T-cell (primary cell): ENCODE measurements at regions of chr1 and their contacts with region 1.

Region 1: GRCh38 chr1:9004700-9005394 is 21.4 kb downstream of the SLC2A7 start:
- DNase-seq: peak; percentile 42 to 86 (median 74)
- ATAC-seq: peak; percentile 88 to 95 (median 90)
- H3K4me3 ChIP-seq: peak overlapping the region in 1 of 2 donors; percentile 38
- H3K4me3 Mint-ChIP-seq: peak overlapping the region in 2 of 3 donors; percentile 21 to 63
- H3K27ac ChIP-seq: no peak overlapping the region
- H3K27ac Mint-ChIP-seq: peak overlapping the region in 1 of 2 donors; percentile 52
- H3K4me1 ChIP-seq: peaks cover 5 to 10% of the 10 kb centered on the region in 2 experiments
- H3K4me1 Mint-ChIP-seq: peaks cover 11 to 13% (median 13%) of the 10 kb centered on the region in 3 donors
- H3K27me3 ChIP-seq: peaks cover 0 to 17% of the 10 kb centered on the region in 2 experiments
- H3K27me3 Mint-ChIP-seq: peaks cover 0 to 1% of the 10 kb centered on the region in 2 donors

Region 2: DNA sequence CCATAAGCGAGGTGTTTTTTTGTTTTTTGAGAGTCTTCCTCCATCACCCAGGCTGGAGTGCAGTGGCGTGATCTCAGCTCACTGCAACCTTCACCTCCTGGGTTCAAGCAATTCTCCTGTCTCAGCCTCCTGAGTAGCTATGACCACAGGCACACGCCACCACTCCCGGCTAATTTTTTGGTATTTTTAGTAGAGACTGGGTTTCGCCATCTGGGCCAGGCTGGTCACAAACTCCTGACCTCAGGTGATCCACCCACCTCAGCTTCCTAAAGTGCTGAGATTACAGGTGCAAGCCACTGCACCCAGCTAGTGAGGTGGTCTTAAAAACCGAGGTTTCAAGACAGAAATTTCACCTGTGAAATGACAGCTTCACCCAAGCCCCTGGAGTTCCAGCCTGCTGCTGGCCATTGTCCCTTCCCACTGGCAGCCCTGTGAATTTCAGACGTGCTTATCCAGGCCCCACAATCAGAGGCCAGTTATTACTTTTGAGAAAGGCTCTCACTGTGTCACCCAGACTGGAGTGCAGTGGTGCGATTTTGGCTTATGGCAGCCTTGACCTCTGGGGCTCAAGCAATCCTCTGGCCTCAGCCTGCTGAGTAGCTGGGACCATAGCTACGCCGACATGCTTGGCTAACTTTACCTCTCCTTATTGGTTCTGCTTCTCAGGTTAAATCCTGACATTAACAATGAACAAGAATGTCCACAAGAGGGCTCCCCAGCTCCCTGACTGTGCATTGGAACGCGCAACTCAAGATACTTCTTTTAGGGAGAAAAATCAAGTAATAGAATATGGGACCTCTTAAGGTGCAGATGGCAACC is 145.8 kb before region 1 on chr1:
- CTCF ChIA-PET with region 1: interaction called, 6 to 19 read pairs
- POLR2A ChIA-PET with region 1: no interaction called
- DNase-seq: peak in 32 of 35 experiments; percentile 12 to 76 (median 43)
- ATAC-seq: peak; percentile 62 to 75 (median 68)
- H3K4me3 ChIP-seq: no peak overlapping the region
- H3K4me3 Mint-ChIP-seq: no peak overlapping the region
- H3K27ac ChIP-seq: no peak overlapping the region
- H3K27ac Mint-ChIP-seq: peak overlapping the region; percentile 53 to 84
- H3K4me1 ChIP-seq: peaks cover 0 to 12% of the 10 kb centered on the region in 2 experiments
- H3K4me1 Mint-ChIP-seq: peaks cover 16 to 25% (median 21%) of the 10 kb centered on the region in 3 donors
- H3K27me3 ChIP-seq: no peaks in the 10 kb centered on the region
- H3K27me3 Mint-ChIP-seq: no peaks in the 10 kb centered on the region

Region 3: GRCh38 chr1:8879922-8880676 is 124.7 kb before region 1 on chr1:
- CTCF ChIA-PET with region 1: no interaction called
- POLR2A ChIA-PET with region 1: no interaction called
- DNase-seq: peak in 1 of 35 experiments; percentile 15
- ATAC-seq: no peak
- H3K4me3 ChIP-seq: no peak overlapping the region
- H3K4me3 Mint-ChIP-seq: peak overlapping the region; percentile 82 to 95 (median 89)
- H3K27ac ChIP-seq: no peak overlapping the region
- H3K27ac Mint-ChIP-seq: peak overlapping the region; percentile 95 to 98
- H3K4me1 ChIP-seq: peaks cover 8 to 44% of the 10 kb centered on the region in 2 experiments
- H3K4me1 Mint-ChIP-seq: peaks cover 32 to 34% (median 34%) of the 10 kb centered on the region in 3 donors
- H3K27me3 ChIP-seq: no peaks in the 10 kb centered on the region
- H3K27me3 Mint-ChIP-seq: no peaks in the 10 kb centered on the region

Region 4: DNA sequence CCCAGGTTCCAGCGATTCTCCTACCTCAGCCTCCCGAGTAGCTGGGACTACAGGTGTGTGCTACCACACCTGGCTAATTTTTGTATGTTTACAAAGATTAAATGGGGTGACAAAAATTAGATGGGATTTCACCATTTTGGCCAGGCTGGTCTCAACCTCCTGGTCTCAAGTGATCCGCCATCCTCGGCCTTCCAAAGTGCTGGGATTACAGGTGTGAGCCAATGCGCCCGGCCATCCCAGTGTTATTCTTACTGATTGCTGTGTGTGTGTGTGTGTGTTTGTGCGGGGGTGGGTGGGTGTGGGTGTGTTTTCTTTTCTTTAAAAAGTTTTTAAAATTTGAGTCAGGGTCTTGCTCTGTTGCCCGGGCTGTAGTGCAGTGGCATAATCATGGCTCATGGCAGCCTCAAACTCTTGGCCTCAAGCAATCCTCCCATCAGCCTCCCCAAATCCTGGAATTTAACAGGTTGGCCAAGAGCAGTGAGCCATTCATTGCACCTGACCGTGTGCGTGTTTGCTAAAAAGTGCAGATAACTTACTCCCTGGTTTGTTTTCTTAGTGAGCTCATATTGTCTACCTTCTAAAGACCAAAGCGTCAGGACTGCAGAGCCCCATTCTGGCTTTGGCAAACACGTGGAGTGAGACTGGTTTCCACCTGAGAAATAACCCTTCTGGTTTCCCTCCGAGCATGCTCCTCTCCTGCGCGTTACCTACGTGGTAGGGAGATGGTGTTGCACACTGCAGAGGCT is 91.6 kb before region 1 on chr1:
- CTCF ChIA-PET with region 1: interaction called, 9 to 17 read pairs
- POLR2A ChIA-PET with region 1: no interaction called
- DNase-seq: no peak
- ATAC-seq: no peak
- H3K4me3 ChIP-seq: no peak overlapping the region
- H3K4me3 Mint-ChIP-seq: no peak overlapping the region
- H3K27ac ChIP-seq: no peak overlapping the region
- H3K27ac Mint-ChIP-seq: no peak overlapping the region
- H3K4me1 ChIP-seq: peaks cover 2 to 4% of the 10 kb centered on the region in 2 experiments
- H3K4me1 Mint-ChIP-seq: peaks cover 6 to 14% (median 6%) of the 10 kb centered on the region in 3 donors
- H3K27me3 ChIP-seq: peaks cover 0 to 23% of the 10 kb centered on the region in 2 experiments
- H3K27me3 Mint-ChIP-seq: no peaks in the 10 kb centered on the region

Region 5: DNA sequence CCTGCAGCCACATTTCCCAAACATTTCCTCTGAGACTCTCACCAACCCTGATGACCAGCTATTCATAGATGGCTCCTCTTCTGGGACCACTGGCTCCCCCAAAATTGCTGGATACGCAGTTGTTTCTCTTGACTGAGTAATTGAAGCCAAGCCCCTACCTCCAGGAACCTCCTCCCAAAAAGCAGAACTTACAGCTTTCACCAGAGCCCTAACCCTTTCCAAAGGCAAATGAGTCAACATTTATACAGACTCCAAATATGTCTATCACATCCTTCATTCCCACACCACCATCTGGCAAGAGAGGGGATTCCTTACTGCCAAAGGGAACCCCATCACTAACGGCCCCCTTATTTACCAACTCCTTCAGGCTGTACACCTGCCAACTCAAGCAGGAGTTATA is 79.4 kb before region 1 on chr1:
- CTCF ChIA-PET with region 1: interaction called in 1 of 2 experiments, 11 read pairs
- POLR2A ChIA-PET with region 1: no interaction called
- DNase-seq: no peak
- ATAC-seq: no peak
- H3K4me3 ChIP-seq: peak overlapping the region in 1 of 2 donors; percentile 22
- H3K4me3 Mint-ChIP-seq: no peak overlapping the region
- H3K27ac ChIP-seq: no peak overlapping the region
- H3K27ac Mint-ChIP-seq: no peak overlapping the region
- H3K4me1 ChIP-seq: peaks cover 21 to 38% of the 10 kb centered on the region in 2 experiments
- H3K4me1 Mint-ChIP-seq: peaks cover 21 to 32% (median 22%) of the 10 kb centered on the region in 3 donors
- H3K27me3 ChIP-seq: no peaks in the 10 kb centered on the region
- H3K27me3 Mint-ChIP-seq: no peaks in the 10 kb centered on the region

Region 6: DNA sequence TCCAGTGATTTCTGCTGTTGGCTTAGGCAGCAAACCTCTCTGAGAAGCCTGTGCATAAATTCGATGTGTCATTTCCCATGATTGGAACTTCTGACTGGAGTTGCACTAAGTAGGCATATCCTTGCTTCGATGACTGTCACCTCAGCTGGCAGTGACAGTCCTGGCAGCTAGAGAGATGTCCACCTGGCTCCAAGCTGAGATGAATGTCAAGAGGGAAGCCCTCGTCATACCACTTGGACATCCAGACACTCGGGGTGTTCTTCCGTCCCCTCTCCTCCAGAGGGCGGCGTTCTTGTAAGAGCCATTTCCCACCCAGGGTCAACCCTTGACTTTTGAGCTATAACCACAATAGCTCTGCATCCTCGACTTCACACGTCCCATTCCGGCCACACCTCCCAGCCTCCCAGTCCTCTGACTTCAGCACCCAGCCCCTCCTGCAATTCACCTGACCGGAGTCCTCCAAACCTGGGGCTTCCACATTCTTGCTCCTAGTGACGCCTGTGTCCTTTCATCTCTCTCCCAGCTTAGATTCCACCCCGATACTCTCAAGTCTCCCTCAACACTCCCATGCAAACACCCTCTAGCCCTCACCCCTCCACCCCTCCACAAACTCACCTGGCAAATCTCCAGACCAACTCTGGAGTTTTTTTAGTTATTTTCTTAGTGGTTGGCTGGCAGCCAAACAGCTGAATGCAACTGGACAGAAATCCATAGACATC is 41.9 kb before region 1 on chr1:
- CTCF ChIA-PET with region 1: interaction called, 3 to 14 read pairs
- POLR2A ChIA-PET with region 1: no interaction called
- DNase-seq: peak in 21 of 35 experiments; percentile 11 to 54 (median 24)
- ATAC-seq: peak; percentile 33 to 53 (median 50)
- H3K4me3 ChIP-seq: no peak overlapping the region
- H3K4me3 Mint-ChIP-seq: peak overlapping the region; percentile 34 to 92 (median 45)
- H3K27ac ChIP-seq: no peak overlapping the region
- H3K27ac Mint-ChIP-seq: peak overlapping the region; percentile 82 to 85
- H3K4me1 ChIP-seq: peaks cover 10 to 64% of the 10 kb centered on the region in 2 experiments
- H3K4me1 Mint-ChIP-seq: peaks cover 61 to 85% (median 75%) of the 10 kb centered on the region in 3 donors
- H3K27me3 ChIP-seq: peaks cover 0 to 2% of the 10 kb centered on the region in 2 experiments
- H3K27me3 Mint-ChIP-seq: peaks cover 0 to 2% of the 10 kb centered on the region in 2 donors

Region 7: DNA sequence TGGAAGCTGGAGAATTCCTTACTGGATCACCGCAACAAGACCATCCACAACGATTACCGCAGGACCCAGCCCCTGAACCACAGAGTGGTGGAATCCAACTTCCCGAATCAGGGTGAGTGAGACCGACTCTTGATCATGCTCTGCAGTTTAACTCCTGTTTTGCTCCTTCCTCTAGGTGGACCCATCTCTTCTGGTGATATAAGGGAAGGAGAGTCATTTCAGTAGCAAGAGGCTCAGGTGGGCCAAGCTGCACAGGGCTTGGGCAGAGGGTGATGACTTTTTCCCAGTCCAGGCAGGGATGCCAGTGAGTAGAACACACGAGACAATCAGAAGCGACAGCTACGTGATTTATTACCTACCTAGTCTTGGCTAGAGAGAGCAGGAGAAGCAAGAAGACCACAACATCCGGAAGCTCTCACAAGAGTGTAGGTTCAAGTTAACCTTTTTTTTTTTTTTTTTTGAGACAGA is 33.9 kb before region 1 on chr1:
- CTCF ChIA-PET with region 1: interaction called, 3 to 16 read pairs
- POLR2A ChIA-PET with region 1: interaction called in 1 of 2 experiments, 13 read pairs
- DNase-seq: peak in 32 of 35 experiments; percentile 9 to 75 (median 35)
- ATAC-seq: peak; percentile 84 to 90 (median 87)
- H3K4me3 ChIP-seq: peak overlapping the region; percentile 45 to 72
- H3K4me3 Mint-ChIP-seq: peak overlapping the region; percentile 92 to 94 (median 92)
- H3K27ac ChIP-seq: peak overlapping the region; percentile 47
- H3K27ac Mint-ChIP-seq: peak overlapping the region; percentile 97 to 99
- H3K4me1 ChIP-seq: peaks cover 12 to 41% of the 10 kb centered on the region in 2 experiments
- H3K4me1 Mint-ChIP-seq: peaks cover 48 to 66% (median 50%) of the 10 kb centered on the region in 3 donors
- H3K27me3 ChIP-seq: no peaks in the 10 kb centered on the region
- H3K27me3 Mint-ChIP-seq: no peaks in the 10 kb centered on the region

Region 8: DNA sequence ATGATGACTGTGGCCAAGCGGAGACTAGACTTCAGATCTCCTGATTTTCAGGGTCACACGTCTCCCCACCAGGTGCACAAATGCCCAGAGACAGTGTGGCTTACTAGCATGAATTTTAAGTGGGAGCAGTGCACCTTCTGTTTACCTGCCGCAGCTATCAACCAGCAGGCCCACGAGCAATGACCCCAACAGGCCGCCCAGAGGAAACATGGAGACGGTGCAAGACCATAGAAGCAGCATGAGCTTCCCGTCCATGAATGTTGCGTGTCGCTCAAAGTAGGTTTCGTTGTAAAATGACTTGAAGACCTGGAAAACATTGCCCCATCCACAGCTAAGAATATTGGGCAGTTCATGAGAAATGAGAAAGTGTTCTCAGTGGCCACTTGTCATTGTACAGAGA is 17.9 kb after region 1 on chr1:
- CTCF ChIA-PET with region 1: no interaction called
- POLR2A ChIA-PET with region 1: no interaction called
- DNase-seq: no peak
- ATAC-seq: no peak
- H3K4me3 ChIP-seq: no peak overlapping the region
- H3K4me3 Mint-ChIP-seq: no peak overlapping the region
- H3K27ac ChIP-seq: no peak overlapping the region
- H3K27ac Mint-ChIP-seq: no peak overlapping the region
- H3K4me1 ChIP-seq: no peaks in the 10 kb centered on the region
- H3K4me1 Mint-ChIP-seq: peaks cover 0 to 7% (median 2%) of the 10 kb centered on the region in 3 donors
- H3K27me3 ChIP-seq: peaks cover 0 to 20% of the 10 kb centered on the region in 2 experiments
- H3K27me3 Mint-ChIP-seq: peaks cover under 1 to 4% of the 10 kb centered on the region in 2 donors

Region 9: GRCh38 chr1:9065213-9065751 is 60.4 kb after region 1 on chr1:
- CTCF ChIA-PET with region 1: no interaction called
- POLR2A ChIA-PET with region 1: interaction called in 1 of 2 experiments, 10 read pairs
- DNase-seq: no peak
- ATAC-seq: no peak
- H3K4me3 ChIP-seq: no peak overlapping the region
- H3K4me3 Mint-ChIP-seq: no peak overlapping the region
- H3K27ac ChIP-seq: no peak overlapping the region
- H3K27ac Mint-ChIP-seq: no peak overlapping the region
- H3K4me1 ChIP-seq: no peaks in the 10 kb centered on the region
- H3K4me1 Mint-ChIP-seq: peaks cover 0 to 9% (median 2%) of the 10 kb centered on the region in 3 donors
- H3K27me3 ChIP-seq: peaks cover 0 to 12% of the 10 kb centered on the region in 2 experiments
- H3K27me3 Mint-ChIP-seq: peaks cover 5 to 8% of the 10 kb centered on the region in 2 donors

Region 10: DNA sequence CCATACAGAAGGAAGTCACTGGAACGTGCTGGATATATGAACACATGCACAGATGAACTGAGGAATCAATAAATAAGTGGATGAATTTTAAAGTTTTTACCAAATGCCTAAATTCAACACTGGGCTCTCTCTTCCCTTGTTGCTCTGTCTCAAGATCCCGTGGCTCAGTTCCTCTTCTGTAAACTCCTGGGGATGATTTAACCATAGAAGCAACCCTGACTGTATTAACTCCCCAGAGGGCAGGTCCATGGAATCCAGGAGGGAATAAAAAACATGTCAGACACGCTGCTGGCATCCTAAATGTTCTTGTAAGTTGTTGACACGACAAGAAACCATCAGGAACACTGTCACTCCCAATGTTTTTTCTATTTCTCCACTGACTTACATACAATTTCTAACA is 169.4 kb after region 1 on chr1:
- CTCF ChIA-PET with region 1: no interaction called
- POLR2A ChIA-PET with region 1: no interaction called
- DNase-seq: no peak
- ATAC-seq: no peak
- H3K4me3 ChIP-seq: no peak overlapping the region
- H3K4me3 Mint-ChIP-seq: no peak overlapping the region
- H3K27ac ChIP-seq: no peak overlapping the region
- H3K27ac Mint-ChIP-seq: no peak overlapping the region
- H3K4me1 ChIP-seq: no peaks in the 10 kb centered on the region
- H3K4me1 Mint-ChIP-seq: no peaks in the 10 kb centered on the region
- H3K27me3 ChIP-seq: peaks cover 0 to 22% of the 10 kb centered on the region in 2 experiments
- H3K27me3 Mint-ChIP-seq: peaks cover 0 to 15% of the 10 kb centered on the region in 2 donors